Activated CD8-positive, alpha-beta T cell treated with anti-CD3 and anti-CD28 coated beads for 36 hours (primary cell): ENCODE measurements at regions of chr1 and their contacts with region 1.

Region 1: GRCh38 chr1:58515794-58516401 is 30.6 kb downstream of the OMA1 start:
- DNase-seq: peak; percentile 38
- ATAC-seq: peak; percentile 51
- H3K4me3 Mint-ChIP-seq: no peak overlapping the region
- H3K27ac Mint-ChIP-seq: peak overlapping the region; percentile 47
- H3K4me1 Mint-ChIP-seq: peaks cover 10% of the 10 kb centered on the region
- H3K27me3 Mint-ChIP-seq: no peaks in the 10 kb centered on the region
- CTCF ChIP-seq: peak; percentile 89

Region 2: GRCh38 chr1:57894315-57894714 is 621.6 kb before region 1 on chr1:
- CTCF ChIA-PET with region 1: no interaction called
- POLR2A ChIA-PET with region 1: no interaction called
- intact Hi-C with region 1: no loop called
- DNase-seq: no peak
- ATAC-seq: no peak
- H3K4me3 Mint-ChIP-seq: no peak overlapping the region
- H3K27ac Mint-ChIP-seq: no peak overlapping the region
- H3K4me1 Mint-ChIP-seq: no peaks in the 10 kb centered on the region
- H3K27me3 Mint-ChIP-seq: peaks cover 7% of the 10 kb centered on the region
- CTCF ChIP-seq: no peak

Region 3: DNA sequence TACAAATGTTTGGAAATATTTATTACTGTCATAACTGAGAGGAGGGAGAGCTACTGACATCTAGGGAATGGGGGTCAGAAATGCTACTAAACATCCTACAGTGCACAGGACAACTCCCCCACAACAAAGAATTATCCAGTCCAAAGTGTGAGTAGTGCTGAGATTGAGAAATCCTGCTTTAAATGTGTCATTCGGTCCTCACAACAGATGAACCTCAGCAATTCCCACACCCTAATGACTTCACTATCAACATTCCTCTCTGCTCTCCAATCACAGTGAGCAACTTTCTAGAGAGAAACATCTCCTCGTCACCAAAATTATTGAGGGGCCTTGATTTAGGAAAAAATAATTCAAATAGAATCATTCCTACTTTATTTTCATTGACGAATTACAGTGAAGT is 12.6 kb after region 1 on chr1:
- CTCF ChIA-PET with region 1: interaction called, 51 read pairs
- POLR2A ChIA-PET with region 1: no interaction called
- intact Hi-C with region 1: no loop called
- DNase-seq: no peak
- ATAC-seq: no peak
- H3K4me3 Mint-ChIP-seq: no peak overlapping the region
- H3K27ac Mint-ChIP-seq: no peak overlapping the region
- H3K4me1 Mint-ChIP-seq: peaks cover 14% of the 10 kb centered on the region
- H3K27me3 Mint-ChIP-seq: no peaks in the 10 kb centered on the region
- CTCF ChIP-seq: no peak

Region 4: GRCh38 chr1:58539553-58539952 is 23.7 kb after region 1 on chr1:
- CTCF ChIA-PET with region 1: interaction called, 107 read pairs
- POLR2A ChIA-PET with region 1: no interaction called
- intact Hi-C with region 1: no loop called
- DNase-seq: no peak
- ATAC-seq: no peak
- H3K4me3 Mint-ChIP-seq: no peak overlapping the region
- H3K27ac Mint-ChIP-seq: no peak overlapping the region
- H3K4me1 Mint-ChIP-seq: peaks cover 8% of the 10 kb centered on the region
- H3K27me3 Mint-ChIP-seq: no peaks in the 10 kb centered on the region
- CTCF ChIP-seq: no peak

Region 5: DNA sequence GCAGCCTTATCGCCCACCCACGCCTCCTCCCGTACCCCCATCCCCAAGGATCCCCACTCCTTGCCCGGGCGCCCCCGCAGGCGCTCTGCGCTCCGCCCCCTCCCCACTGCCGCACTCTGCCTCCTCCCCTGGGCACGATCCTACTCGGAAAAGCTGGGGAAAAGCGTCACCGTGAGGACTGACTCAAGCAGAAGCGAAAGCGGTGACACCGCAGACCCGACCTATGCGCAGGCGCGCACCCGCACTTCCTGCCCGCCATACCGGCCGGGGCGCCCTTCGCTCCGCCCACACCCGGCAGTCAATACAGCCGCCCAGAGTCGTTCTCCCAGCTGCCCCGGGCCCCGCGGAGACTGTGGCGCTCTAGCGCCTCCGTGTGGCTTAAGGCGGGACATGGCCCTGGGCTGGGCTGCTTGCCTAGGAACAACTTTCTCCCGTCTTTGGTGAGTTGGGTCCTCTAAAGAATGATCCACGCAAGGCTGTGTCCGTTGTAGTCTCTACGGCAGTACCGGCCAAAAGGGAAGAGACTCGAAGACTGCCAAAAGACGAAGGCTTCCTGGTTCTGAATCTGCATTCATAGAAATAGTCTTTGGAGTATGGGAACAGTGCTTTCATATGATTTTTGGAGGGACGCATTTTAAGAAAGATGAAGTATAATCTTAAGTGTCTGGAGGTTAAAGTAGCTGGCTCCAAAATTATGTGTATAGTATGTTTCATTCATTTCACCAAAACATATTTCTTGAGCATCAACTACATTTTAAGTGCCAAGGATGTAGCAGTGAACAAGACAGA is 30.8 kb after region 1 on chr1 and contains the start of gene OMA1:
- CTCF ChIA-PET with region 1: interaction called, 107 read pairs
- POLR2A ChIA-PET with region 1: interaction called, 5 read pairs
- intact Hi-C with region 1: loop called (anchors 2 kb)
- DNase-seq: peak; percentile 97
- ATAC-seq: peak; percentile 95
- H3K4me3 Mint-ChIP-seq: peak within 1 kb of the TSS; percentile 93
- H3K27ac Mint-ChIP-seq: peak within 1 kb of the TSS; percentile 95
- H3K4me1 Mint-ChIP-seq: peaks cover 18% of the 10 kb centered on the region
- H3K27me3 Mint-ChIP-seq: no peaks in the 10 kb centered on the region
- CTCF ChIP-seq: peak; percentile 78
- total RNA-seq, gene OMA1: 14.7 to 14.9 TPM

Region 6: GRCh38 chr1:58652651-58653184 is 136.8 kb after region 1 on chr1:
- CTCF ChIA-PET with region 1: interaction called, 99 read pairs
- POLR2A ChIA-PET with region 1: interaction called, 3 read pairs
- intact Hi-C with region 1: loop called (anchors 2 kb)
- DNase-seq: peak; percentile 72
- ATAC-seq: peak; percentile 90
- H3K4me3 Mint-ChIP-seq: no peak overlapping the region
- H3K27ac Mint-ChIP-seq: no peak overlapping the region
- H3K4me1 Mint-ChIP-seq: peaks cover 21% of the 10 kb centered on the region
- H3K27me3 Mint-ChIP-seq: no peaks in the 10 kb centered on the region
- CTCF ChIP-seq: peak; percentile 83

Region 7: DNA sequence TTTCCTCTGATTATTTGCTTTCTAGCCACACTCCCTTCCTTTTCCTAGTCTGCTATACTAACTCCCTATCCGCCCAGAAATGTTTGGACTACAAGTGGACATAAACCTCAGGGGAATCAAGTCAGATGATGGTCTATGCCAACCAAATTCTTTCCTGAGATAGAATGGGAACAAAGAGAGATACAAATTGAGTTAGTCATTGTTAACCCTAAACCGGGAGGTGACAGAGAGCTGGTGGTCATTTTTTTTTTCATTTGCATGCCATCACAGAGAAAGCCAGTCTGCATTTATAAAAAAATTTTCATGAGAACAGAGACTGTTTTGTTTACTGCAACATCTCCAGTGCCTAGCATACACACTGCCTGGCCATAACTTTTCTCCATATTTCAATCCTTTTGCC is 149.0 kb after region 1 on chr1:
- CTCF ChIA-PET with region 1: interaction called, 23 read pairs
- POLR2A ChIA-PET with region 1: no interaction called
- intact Hi-C with region 1: no loop called
- DNase-seq: no peak
- ATAC-seq: no peak
- H3K4me3 Mint-ChIP-seq: no peak overlapping the region
- H3K27ac Mint-ChIP-seq: no peak overlapping the region
- H3K4me1 Mint-ChIP-seq: no peaks in the 10 kb centered on the region
- H3K27me3 Mint-ChIP-seq: no peaks in the 10 kb centered on the region
- CTCF ChIP-seq: no peak